Right ventricle myocardium inferior (tissue), 1 donor: ENCODE measurements at regions of chr7 and their contacts with region 1.

Region 1: DNA sequence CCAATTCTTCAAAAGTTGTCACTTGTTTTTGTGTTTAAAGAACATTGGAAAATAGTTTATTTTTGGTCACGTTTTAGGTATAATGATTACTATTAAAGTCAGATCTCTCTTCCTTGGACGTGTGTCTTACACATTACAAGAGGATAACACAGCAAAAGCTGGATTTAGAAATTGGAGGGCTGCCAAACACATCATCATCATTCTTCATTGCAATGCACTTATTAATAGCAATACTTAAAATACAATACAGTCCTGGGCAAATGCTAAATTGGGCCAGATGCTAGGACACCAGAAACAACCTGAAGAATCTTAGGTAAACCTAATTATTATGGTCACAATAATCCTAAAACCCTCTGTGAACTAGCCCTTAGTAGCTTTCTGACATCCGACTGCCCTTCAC is 303.6 kb downstream of the DGKB start:
- DNase-seq: no peak
- ATAC-seq: peak; percentile 54

Region 2: DNA sequence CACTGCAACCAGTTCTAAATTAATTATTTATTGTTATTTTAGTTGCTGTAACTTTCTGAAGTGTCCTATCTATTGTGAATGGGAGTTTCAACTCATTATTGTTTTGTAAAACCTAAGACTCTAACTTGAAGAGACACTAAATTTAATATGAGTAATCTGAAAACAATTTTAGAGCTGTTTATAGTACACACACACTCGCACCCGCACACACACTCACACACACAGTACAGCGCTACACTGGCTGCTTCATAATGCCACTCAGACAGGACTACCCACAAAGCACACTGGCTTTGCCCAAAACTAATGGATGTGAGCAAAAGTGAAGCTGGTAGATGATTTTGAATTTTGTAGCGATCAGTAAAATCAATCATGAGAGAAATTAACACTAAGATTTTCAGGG is 370.6 kb before region 1 on chr7:
- intact Hi-C with region 1: loop called (anchors 10 kb)
- DNase-seq: no peak
- ATAC-seq: no peak

Region 3: GRCh38 chr7:14551310-14551709 is 47.7 kb before region 1 on chr7:
- intact Hi-C with region 1: no loop called
- DNase-seq: no peak
- ATAC-seq: no peak

Region 4: DNA sequence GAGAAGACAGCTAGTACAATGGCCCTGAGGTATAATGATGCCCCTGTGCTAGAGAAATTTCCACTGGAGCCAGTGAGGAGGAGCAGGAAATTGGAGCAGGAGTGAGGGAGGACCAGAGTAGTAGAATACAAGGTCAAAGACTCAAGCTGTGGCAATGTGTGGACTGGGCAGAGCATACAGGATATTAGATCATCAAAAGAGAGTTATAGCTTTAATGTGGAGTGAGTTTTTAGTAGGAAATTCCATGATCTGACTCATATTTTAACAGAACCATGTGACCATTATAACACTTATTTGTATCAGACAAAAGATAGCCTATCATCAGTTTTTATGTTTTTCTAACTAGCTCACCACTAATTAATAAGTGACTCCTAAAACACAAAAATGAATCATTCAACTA is 149.5 kb after region 1 on chr7:
- intact Hi-C with region 1: no loop called
- DNase-seq: no peak
- ATAC-seq: no peak